Activated CD4-positive, alpha-beta memory T cell treated with anti-CD3 and anti-CD28 coated beads, Interleukin-2, amount 10 ng/mL, durations not matched to agents 7 days and 5 days (primary cell): ENCODE measurements at regions of chr12 and their contacts with region 1.

Region 1: DNA sequence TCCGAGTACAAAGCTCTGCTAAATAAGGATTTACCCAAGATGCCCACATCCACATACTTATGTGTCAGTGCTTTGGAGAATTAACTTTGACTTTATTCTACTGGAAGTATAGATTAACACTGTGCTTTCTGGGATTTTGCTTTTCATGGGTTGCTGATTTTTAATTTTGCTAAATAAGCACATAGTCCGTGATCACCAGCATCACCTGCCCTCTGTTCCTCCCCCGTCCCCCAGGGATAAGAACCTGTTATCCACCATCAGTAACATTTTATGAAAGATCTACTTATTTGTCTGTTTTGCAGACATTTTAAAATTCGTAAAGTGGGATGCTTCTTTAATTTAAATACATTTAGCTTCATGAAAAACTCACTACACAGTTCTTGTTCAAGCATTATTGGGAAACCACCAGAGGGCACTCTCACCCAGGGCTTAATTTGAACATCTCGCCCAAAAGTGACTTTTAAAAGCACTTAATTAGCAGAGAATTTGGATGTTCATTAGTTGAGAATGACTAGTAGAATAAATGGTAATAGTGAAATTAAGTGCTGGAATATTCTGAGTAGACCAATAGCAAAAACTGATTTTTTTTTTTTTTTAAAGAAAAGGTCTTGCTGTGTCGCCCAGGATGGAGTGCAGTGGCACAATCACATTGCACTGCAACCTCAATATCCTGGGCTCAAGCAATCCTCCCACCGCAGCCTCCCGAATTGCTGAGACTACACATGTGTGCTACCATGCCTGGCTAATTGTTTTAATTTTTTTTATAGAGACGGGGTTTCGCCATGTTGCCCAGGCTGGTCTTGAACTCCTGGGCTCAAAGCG is 35.7 kb downstream of the MRPL42 start:
- DNase-seq: peak; percentile 68
- H3K4me3 Mint-ChIP-seq: no peak overlapping the region
- H3K27ac Mint-ChIP-seq: no peak overlapping the region
- H3K4me1 Mint-ChIP-seq: peaks cover 23% of the 10 kb centered on the region
- H3K27me3 Mint-ChIP-seq: no peaks in the 10 kb centered on the region

Region 2: DNA sequence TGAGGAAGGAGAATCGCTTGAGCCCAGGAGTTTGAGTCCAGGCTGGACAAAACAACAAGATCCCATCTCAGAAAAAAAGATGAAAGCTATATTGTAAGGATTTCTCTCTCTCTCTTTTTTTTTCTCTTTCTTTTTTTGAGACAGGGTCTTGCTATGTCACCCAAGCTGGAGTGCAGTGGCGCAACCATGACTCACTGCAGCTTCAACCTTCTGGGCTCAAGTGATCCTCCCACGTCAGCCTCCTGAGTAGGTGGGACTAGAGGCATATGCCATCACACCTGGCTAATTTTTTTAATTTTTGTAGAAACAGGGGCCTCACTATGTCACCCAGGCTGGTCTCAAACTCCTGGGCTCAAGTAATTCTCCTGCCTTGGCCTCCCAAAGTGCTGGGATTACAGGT is 41.5 kb before region 1 on chr12:
- CTCF ChIA-PET with region 1: no interaction called
- POLR2A ChIA-PET with region 1: no interaction called
- DNase-seq: no peak
- H3K4me3 Mint-ChIP-seq: no peak overlapping the region
- H3K27ac Mint-ChIP-seq: no peak overlapping the region
- H3K4me1 Mint-ChIP-seq: peaks cover 2% of the 10 kb centered on the region
- H3K27me3 Mint-ChIP-seq: no peaks in the 10 kb centered on the region

Region 3: DNA sequence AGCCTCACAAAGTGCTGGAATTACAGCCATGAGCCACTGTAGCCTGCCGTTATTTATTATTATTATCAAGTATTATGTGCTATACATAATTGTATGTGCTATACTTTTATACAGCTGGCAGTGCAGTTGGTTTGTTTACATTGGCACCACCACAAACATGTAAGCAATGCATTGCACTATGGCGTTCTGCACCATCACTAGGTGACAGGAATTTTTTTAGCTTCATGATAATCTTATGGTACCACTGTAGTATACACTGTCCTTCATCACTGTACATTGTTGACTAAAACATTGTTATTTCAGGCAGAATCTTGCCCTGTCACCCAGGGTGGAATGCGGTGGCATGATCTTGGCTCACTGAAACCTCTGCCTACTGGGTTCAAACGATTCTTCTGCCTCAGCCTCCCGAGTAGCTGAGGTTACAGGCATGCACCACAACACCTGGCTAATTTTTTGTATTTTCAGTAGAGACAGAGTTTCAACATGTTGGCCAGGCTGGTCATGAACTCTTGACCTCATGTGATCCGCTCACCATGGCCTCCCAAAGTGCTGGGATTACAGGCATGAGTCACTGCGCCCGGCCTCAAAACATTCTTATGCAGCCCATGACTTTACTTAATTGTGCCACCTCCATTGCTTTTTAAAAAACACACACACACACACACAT is 18.6 kb before region 1 on chr12:
- CTCF ChIA-PET with region 1: interaction called, 10 read pairs
- POLR2A ChIA-PET with region 1: no interaction called
- DNase-seq: no peak
- H3K4me3 Mint-ChIP-seq: no peak overlapping the region
- H3K27ac Mint-ChIP-seq: no peak overlapping the region
- H3K4me1 Mint-ChIP-seq: no peaks in the 10 kb centered on the region
- H3K27me3 Mint-ChIP-seq: no peaks in the 10 kb centered on the region

Region 4: GRCh38 chr12:93563807-93564538 is 61.0 kb after region 1 on chr12:
- CTCF ChIA-PET with region 1: interaction called, 28 read pairs
- POLR2A ChIA-PET with region 1: interaction called, 7 read pairs
- DNase-seq: no peak
- H3K4me3 Mint-ChIP-seq: no peak overlapping the region
- H3K27ac Mint-ChIP-seq: no peak overlapping the region
- H3K4me1 Mint-ChIP-seq: peaks cover 15% of the 10 kb centered on the region
- H3K27me3 Mint-ChIP-seq: no peaks in the 10 kb centered on the region

Region 5: GRCh38 chr12:93569656-93570551 is 66.9 kb after region 1 on chr12:
- CTCF ChIA-PET with region 1: interaction called, 28 read pairs
- POLR2A ChIA-PET with region 1: interaction called, 7 read pairs
- DNase-seq: peak; percentile 82
- H3K4me3 Mint-ChIP-seq: peak overlapping the region; percentile 83
- H3K27ac Mint-ChIP-seq: peak overlapping the region; percentile 90
- H3K4me1 Mint-ChIP-seq: peaks cover 36% of the 10 kb centered on the region
- H3K27me3 Mint-ChIP-seq: peaks cover 2% of the 10 kb centered on the region

Region 6: DNA sequence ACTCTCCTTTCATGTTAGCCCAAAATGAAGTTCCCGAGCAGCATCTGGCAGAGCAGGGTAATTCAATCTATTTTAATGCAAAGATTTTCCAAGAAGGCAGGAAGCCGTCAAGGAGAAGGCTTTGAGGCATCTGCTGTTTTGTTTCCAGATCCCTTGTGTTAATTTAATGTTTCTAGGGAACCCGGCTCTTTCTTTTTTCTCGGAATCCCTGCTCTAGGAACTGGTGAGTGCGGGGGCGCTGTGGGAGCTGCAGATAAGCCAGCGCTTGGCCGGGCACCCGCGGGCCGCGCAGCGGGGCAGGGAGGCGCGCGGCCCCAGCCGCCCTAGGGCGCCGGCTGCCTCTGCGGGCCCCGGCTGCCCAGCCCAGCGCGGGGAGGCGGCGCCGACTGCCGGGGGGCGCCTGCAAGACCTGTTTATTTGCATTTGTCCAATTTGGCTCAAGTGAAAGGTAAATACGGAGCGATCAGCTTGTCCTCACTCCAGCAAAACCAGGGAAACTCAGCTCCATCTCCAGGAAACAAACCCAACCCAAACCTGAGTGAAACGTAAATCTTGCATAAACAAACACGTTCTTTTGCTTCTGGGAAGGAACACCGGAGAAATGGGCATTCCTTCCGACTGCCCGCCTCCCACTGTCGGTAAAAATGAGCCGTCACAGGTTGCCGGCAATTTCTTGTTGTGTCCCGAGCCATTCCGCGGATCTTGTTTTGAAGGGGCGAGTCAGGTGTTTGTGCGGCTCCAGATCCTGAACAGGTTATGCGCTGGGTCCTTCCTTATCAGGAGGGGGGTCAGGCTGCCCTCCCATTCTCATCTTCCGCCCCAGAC is 239.3 kb after region 1 on chr12:
- CTCF ChIA-PET with region 1: interaction called, 19 read pairs
- POLR2A ChIA-PET with region 1: no interaction called
- DNase-seq: peak; percentile 70
- H3K4me3 Mint-ChIP-seq: peak overlapping the region; percentile 86
- H3K27ac Mint-ChIP-seq: peak overlapping the region; percentile 93
- H3K4me1 Mint-ChIP-seq: peaks cover 34% of the 10 kb centered on the region
- H3K27me3 Mint-ChIP-seq: no peaks in the 10 kb centered on the region

Region 7: DNA sequence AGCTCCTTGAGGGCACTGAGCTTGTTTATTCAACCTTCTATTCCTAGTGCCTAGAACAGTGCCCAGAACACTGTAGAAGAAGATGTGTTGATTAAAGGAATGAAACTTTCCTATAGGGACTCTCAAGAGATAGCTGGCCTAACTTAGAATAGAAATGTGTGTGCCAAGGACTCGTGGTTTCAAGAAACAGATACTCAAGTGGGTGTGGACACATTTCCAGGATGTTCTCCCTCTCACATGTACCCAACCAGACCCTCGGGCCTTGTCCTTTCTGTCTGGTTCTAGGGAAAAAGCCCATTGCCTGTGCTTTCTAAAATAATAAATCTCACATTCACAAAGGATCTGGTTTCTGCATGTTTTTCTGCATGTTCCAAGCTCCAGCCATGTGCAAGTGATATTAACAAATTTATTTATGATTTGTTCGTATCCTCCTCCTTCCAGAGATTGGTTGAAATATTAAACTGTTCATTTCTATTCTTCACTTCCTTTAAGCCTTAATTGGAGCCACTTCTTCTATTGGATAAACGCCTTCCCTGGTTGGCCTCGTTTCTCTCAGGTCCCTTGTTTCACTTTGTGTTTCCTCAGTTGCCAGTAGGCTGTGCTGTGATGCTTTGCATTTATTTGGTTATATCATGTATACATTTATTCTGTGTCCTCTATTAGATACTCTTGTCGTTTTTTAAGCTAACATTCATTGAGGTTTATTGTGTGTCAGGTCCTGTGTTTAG is 263.9 kb after region 1 on chr12:
- CTCF ChIA-PET with region 1: interaction called, 35 read pairs
- POLR2A ChIA-PET with region 1: no interaction called
- DNase-seq: peak; percentile 57
- H3K4me3 Mint-ChIP-seq: peak overlapping the region; percentile 5
- H3K27ac Mint-ChIP-seq: peak overlapping the region; percentile 75
- H3K4me1 Mint-ChIP-seq: peaks cover 42% of the 10 kb centered on the region
- H3K27me3 Mint-ChIP-seq: no peaks in the 10 kb centered on the region